Activated T-helper 2 cell treated with anti-CD3 and anti-CD28 coated beads, Interferon-gamma antibody, Interleukin-2, Interleukin-4, amounts not matched to agents 10 μg/mL and 5 μg/mL and 100 μg/mL, durations not matched to agents 14 hours and 24 hours and 36 hours (primary cell): ENCODE measurements at regions of chr1 and their contacts with region 1.

Region 1: DNA sequence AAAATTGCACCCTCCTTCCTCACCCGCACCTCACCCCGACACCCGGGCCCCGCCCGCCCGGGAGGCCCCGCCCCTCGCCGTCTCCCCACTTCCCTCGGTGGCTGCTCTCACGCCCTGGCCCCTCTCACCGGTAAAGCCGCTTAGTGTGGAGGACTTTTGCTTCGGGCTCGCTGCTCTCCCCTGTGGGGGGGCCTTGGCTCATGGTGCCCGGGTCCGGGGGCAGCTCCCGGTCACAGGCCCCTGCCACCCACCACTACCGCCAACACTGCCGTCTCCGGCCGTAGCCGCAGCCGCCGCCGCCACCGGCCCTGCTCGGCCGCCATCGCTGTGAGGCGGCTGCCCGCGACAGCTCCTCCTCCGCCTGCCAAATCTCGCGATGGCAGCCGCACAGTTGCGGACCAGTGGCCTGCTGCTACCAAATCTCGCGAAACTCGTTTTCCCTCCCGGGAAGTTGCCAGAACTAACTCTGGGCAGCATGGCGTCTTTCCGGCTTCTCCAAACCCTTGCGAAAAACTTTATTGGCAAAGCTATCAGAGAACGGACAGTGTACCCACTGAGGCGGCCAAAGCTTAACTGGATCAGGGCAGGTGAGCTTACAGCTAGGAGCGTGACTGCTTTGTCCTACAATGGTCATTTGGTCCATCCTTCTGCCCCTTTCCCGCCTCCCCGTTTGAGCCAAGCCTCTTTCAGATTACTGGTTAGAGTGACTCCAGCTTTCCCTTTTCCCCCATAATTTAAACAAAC is at the start of gene SMG5:
- DNase-seq: peak; percentile 96
- H3K4me3 Mint-ChIP-seq: peak within 1 kb of the TSS; percentile 94
- H3K27ac Mint-ChIP-seq: peak within 1 kb of the TSS; percentile 89
- H3K4me1 Mint-ChIP-seq: peaks cover 31% of the 10 kb centered on the region
- H3K27me3 Mint-ChIP-seq: no peaks in the 10 kb centered on the region
- total RNA-seq, gene SMG5: 83.2 and 89.3 TPM in 2 replicates

Region 2: GRCh38 chr1:155859234-155859829 is 423.3 kb before region 1 on chr1 and contains the start of gene SYT11:
- intact Hi-C with region 1: loop called (anchors 5 kb)
- DNase-seq: peak; percentile 90
- H3K4me3 Mint-ChIP-seq: peak within 1 kb of the TSS; percentile 85
- H3K27ac Mint-ChIP-seq: peak within 1 kb of the TSS; percentile 92
- H3K4me1 Mint-ChIP-seq: peaks cover 41% of the 10 kb centered on the region
- H3K27me3 Mint-ChIP-seq: no peaks in the 10 kb centered on the region
- total RNA-seq, gene SYT11: 22.3 and 23.3 TPM in 2 replicates

Region 3: GRCh38 chr1:156198831-156199349 is 83.8 kb before region 1 on chr1:
- intact Hi-C with region 1: loop called (anchors 5 kb)
- DNase-seq: no peak
- H3K4me3 Mint-ChIP-seq: peak overlapping the region; percentile 76
- H3K27ac Mint-ChIP-seq: peak overlapping the region; percentile 95
- H3K4me1 Mint-ChIP-seq: peaks cover 55% of the 10 kb centered on the region
- H3K27me3 Mint-ChIP-seq: no peaks in the 10 kb centered on the region

Region 4: DNA sequence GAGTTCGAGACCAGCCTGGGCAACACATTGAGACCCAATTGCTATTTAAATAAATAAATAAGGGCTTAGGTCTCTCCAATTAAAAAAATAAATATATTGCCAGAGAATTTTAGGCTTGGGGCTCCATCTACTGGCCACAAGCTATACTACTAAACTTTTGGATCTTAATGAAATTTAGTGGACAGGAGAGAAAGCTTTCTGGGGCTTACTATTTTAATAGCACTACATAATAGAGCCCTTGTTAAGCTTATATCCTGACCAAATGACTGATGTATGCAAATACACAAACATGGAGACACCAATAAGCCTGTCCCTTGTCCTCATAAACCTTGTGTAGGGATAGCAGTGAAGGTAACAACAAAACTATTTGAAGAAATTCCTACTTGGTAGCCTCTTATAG is 37.0 kb after region 1 on chr1:
- intact Hi-C with region 1: loop called (anchors 5 kb)
- DNase-seq: no peak
- H3K4me3 Mint-ChIP-seq: no peak overlapping the region
- H3K27ac Mint-ChIP-seq: no peak overlapping the region
- H3K4me1 Mint-ChIP-seq: no peaks in the 10 kb centered on the region
- H3K27me3 Mint-ChIP-seq: no peaks in the 10 kb centered on the region

Region 5: DNA sequence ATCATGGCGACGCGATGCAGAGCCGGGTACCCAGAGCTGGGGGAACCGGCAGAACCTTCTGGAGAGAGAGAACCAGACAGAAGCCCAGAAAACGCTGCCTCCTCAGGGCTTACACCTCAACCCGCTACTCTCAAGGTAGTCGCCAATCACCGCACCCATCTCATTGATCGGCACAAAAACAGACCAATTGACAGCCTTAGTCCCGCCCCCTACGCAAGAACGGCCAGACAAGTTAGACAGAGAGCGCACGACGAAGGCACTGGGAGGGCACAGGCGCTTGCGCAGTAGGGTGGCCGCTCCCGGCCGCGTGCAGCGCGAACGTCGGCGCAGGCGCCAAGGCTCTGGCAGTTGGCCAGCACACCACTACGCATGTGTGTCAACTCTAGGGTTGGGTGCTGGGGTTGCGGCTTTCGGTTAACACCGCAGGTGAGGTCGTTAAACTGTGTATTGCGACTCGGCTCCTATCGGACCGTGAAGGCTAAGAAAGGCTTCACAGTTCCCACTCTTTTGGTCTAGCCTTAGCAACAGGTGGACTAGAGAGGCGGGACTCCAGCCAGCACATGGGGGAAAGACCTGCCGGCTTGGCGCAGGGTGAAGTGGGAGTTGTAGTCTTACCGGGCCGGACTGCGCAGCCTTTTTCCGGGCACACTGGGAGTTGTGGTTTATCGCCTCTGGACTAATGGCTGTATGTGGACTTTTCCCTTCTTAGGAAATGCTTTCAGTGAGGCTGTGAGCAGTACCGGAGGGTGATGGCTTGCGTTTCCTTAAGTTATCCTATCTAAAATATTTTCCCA is 55.7 kb after region 1 on chr1 and contains the starts of genes CCT3 and TSACC:
- intact Hi-C with region 1: loop called (anchors 2 kb)
- DNase-seq: peak; percentile 99
- H3K4me3 Mint-ChIP-seq: peak within 1 kb of the TSS; percentile 99
- H3K27ac Mint-ChIP-seq: peak within 1 kb of the TSS; percentile 96
- H3K4me1 Mint-ChIP-seq: peaks cover 23% of the 10 kb centered on the region
- H3K27me3 Mint-ChIP-seq: peaks cover 2% of the 10 kb centered on the region
- total RNA-seq, gene CCT3: 504 and 517 TPM in 2 replicates
- total RNA-seq, gene TSACC: 0.39 TPM in 1 of 2 replicates, not detected in the other